H1 (cell line): ENCODE measurements at regions of chr21 and their contacts with region 1.

Region 1: DNA sequence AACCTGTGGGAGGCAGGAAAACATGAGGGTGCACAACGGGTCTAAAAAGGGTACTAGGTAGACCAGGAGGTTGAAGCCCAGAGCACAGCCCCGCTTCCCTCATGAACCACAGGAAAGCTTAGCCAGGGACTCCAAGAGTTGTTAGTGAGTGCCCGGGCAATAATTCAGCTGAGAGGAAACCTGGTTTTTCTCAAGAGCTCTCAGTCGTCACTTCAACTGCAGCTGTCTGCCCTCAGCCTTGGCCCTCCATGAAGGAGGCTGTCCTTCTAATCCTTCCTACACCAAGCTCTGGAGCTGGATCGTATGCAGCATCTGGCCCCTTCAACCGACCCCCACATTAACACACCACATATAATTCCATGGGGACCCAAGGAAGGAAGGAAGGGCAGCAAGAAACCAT is 77.0 kb upstream of the BACE2 start:
- DNase-seq: no peak
- H3K4me3 ChIP-seq: no peak overlapping the region
- H3K27ac ChIP-seq: no peak overlapping the region
- H3K4me1 ChIP-seq: no peaks in the 10 kb centered on the region; a peak in 1 of 7 replicates
- H3K27me3 ChIP-seq: no peaks in the 10 kb centered on the region; a peak in 1 of 7 replicates
- CTCF ChIP-seq: no peak
- EP300 ChIP-seq: no peak
- POLR2A ChIP-seq: no peak
- RAD21 ChIP-seq: no peak

Region 2: DNA sequence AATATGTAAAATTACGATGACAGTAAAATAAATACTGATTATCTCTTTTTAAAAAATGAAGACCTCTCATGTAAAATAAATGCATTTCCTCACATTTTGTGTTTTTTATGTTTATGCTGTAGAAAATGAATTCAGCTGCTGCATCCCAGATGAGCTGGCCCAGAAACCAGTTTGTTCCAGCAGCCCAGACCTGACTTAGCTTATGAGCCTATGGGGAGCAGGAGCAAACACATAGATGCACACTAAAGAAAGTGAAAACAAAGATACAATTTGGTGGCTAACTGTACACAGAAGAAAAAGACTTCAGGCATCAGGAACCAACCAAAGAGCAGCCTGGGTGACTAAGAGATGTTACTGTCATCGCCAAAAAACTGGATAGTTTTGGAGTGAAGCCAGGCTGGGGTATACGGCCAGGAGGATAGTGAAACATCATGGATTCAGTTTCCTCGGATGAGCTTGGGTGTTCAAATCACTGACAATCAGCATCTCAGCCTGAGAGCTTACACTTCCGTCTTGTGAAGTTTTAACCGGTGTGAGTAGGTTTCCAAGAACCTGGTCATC is 36.9 kb before region 1 on chr21:
- CTCF ChIA-PET with region 1: no interaction called
- POLR2A ChIA-PET with region 1: no interaction called
- DNase-seq: no peak
- H3K4me3 ChIP-seq: no peak overlapping the region
- H3K27ac ChIP-seq: no peak overlapping the region
- H3K4me1 ChIP-seq: no peaks in the 10 kb centered on the region; a peak in 1 of 7 replicates
- H3K27me3 ChIP-seq: no peaks in the 10 kb centered on the region; a peak in 1 of 7 replicates
- CTCF ChIP-seq: no peak
- EP300 ChIP-seq: no peak
- POLR2A ChIP-seq: no peak
- RAD21 ChIP-seq: no peak

Region 3: GRCh38 chr21:41071258-41072171 is 19.5 kb before region 1 on chr21:
- CTCF ChIA-PET with region 1: interaction called, 13 read pairs
- POLR2A ChIA-PET with region 1: no interaction called
- DNase-seq: peak; percentile 39 to 72
- H3K4me3 ChIP-seq: no peak overlapping the region
- H3K27ac ChIP-seq: no peak overlapping the region
- H3K4me1 ChIP-seq: peaks cover 0 to 4% (median 0%) of the 10 kb centered on the region in 4 experiments; a peak in 4 of 7 replicates
- H3K27me3 ChIP-seq: peaks cover 0 to 7% (median 3%) of the 10 kb centered on the region in 4 experiments; a peak in 4 of 7 replicates
- CTCF ChIP-seq: peak; percentile 73 to 84 (median 76)
- EP300 ChIP-seq: no peak
- POLR2A ChIP-seq: no peak
- RAD21 ChIP-seq: peak; percentile 52 to 71

Region 4: DNA sequence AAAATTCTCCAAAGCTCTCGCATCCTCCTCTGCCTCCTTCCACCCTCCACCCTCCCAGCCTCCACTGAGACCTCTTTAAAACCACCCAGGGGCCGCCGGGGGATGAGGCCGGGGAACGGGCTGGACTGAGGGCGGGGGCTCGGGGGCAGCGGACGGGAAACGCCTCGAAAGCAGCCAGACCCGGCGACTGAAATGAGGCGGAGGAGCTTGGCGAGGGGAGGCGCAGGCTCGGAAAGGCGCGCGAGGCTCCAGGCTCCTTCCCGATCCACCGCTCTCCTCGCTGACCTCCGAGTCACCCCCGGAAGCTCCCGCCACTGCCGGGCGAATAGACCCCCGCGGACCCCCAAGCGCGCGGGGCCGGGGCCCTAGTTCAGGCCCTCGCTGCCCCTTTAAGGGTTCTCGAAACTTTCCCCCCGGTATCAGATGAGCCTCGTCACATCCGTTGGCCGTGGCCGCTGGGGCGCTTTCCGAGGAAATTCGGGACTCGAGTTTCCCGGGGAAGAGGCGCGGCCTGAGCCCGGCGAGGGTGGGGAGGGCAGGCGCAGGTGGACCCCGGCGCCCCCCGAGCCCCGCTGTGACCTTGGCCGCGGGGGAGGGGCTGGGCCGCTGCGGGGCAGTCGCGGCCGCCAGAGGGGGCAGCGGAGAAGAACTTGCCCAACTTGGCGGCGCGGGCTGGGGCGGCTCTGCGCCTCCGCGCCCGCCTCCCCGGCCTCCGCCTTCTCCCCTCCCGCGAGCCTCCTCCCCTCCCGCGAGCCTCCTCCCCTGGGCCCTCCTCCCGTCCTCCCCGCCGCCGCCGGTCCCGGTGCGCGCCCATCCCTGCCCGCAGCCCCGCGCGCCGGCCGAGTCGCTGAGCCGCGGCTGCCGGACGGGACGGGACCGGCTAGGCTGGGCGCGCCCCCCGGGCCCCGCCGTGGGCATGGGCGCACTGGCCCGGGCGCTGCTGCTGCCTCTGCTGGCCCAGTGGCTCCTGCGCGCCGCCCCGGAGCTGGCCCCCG is 76.7 kb after region 1 on chr21 and contains the start of gene BACE2:
- CTCF ChIA-PET with region 1: no interaction called
- POLR2A ChIA-PET with region 1: no interaction called
- DNase-seq: peak in 1 of 2 experiments; percentile 84
- H3K4me3 ChIP-seq: peak within 1 kb of the TSS; percentile 56 to 96 (median 66)
- H3K27ac ChIP-seq: no peak within 1 kb of the TSS
- H3K4me1 ChIP-seq: peaks cover 0 to 7% (median 4%) of the 10 kb centered on the region in 4 experiments; a peak in 4 of 7 replicates
- H3K27me3 ChIP-seq: peaks cover 0 to 31% (median 22%) of the 10 kb centered on the region in 4 experiments; a peak in 6 of 7 replicates
- CTCF ChIP-seq: peak; percentile 50 to 66 (median 52)
- EP300 ChIP-seq: peak in 1 of 2 experiments; percentile 39; a peak in 1 of 3 replicates
- POLR2A ChIP-seq: no peak
- RAD21 ChIP-seq: peak; percentile 4 to 43; a peak in 3 of 4 replicates
- total RNA-seq, gene BACE2: 8.1 and 9.9 TPM in 2 replicates